ENCODE measurements at regions of chr7 and their contacts with region 1.

Region 1: DNA sequence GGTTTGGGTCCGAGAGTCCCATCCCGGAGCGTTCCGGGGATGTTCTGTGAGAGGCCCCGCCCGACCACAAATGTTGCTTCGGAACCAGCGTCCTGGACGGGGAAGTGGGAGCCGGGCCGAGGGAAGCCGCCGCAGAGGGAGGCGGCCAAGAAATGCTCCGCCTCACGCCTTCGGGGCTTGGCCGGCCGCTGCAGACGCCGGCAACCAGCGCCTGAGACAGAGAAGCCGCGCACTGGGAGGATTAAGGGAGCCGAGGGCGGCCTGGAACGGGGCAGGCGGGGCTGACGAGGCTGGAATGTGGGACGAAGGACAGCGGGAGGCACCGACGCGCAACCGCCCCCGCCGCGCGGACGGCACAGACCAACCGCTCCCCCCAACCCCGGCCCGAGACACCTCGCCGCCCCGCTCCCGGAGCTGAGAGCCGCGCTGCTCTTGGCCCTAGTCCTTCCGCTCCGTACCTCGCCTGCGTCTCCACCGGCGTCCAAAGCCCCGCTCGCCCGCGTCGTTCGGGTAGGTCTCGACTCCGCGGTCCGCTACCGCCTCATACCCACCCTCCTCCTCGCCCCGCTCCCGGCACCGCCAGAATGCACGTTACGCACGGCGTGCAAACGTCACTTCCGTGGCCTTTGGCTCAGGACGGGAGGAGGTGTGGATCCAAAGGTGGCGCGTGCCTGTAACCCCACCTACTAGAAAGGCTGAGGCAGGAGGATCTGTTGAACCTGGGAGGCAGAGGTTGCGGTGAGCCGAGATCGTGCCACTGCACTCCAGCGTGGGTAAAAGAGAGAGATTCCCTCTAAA is 36.7 kb upstream of the KCTD7 start:
- DNase-seq: peak; percentile 96
- ATAC-seq: peak; percentile 98
- H3K4me3 Mint-ChIP-seq: peak overlapping the region; percentile 94
- H3K27ac Mint-ChIP-seq: peak overlapping the region; percentile 98
- H3K4me1 Mint-ChIP-seq: peaks cover 46% of the 10 kb centered on the region
- H3K27me3 Mint-ChIP-seq: no peaks in the 10 kb centered on the region

Region 2: GRCh38 chr7:66265566-66265965 is 326.4 kb before region 1 on chr7:
- CTCF ChIA-PET with region 1: no interaction called
- POLR2A ChIA-PET with region 1: no interaction called
- intact Hi-C with region 1: no loop called
- DNase-seq: no peak
- ATAC-seq: no peak
- H3K4me3 Mint-ChIP-seq: no peak overlapping the region
- H3K27ac Mint-ChIP-seq: no peak overlapping the region
- H3K4me1 Mint-ChIP-seq: no peaks in the 10 kb centered on the region
- H3K27me3 Mint-ChIP-seq: peaks cover 5% of the 10 kb centered on the region

Region 3: DNA sequence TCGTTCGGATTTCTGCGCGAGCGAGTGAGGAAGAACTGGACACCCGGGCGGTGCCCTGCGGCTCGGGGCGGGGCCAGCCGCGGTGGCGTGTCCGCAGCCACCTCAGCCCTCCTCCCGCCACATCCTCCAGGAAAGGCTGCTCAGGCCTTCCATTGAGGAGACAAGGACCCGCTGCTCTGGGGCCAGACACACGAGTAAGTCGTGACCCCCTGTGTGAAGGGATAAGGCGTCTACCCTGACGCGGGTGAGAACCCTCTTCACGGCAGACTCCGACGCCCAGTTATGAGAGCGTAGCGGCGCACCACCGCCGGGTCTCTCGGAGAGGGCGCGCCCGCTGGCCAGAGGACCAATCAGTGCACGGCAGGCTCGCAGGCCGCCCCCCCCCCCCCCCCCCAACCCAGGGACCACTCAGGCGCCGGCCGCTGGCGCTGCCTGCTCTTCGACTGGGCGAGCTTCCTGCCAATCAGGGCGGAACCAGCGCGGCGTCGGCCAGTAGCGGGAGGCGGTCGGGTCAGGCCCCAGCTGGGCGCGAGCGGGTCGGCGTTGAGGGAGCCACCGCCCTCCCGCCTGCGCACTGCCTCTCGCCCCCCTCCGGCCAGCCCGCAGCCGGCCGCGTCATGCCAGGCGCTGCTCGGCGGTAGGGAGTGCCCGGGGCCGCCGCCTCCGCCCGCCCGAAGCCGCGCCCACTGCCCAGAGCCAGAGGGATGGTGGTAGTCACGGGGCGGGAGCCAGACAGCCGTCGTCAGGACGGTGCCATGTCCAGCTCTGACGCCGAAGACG is 36.6 kb after region 1 on chr7 and contains the start of gene KCTD7:
- CTCF ChIA-PET with region 1: interaction called, 3 read pairs
- POLR2A ChIA-PET with region 1: interaction called, 7 read pairs
- intact Hi-C with region 1: loop called (anchors 1 kb)
- DNase-seq: peak; percentile 98
- ATAC-seq: peak; percentile 94
- H3K4me3 Mint-ChIP-seq: peak within 1 kb of the TSS; percentile 82
- H3K27ac Mint-ChIP-seq: peak within 1 kb of the TSS; percentile 86
- H3K4me1 Mint-ChIP-seq: peaks cover 45% of the 10 kb centered on the region
- H3K27me3 Mint-ChIP-seq: peaks cover 2% of the 10 kb centered on the region
- total RNA-seq, gene KCTD7: 7.8 TPM